GM23248 (cell line): ENCODE measurements at regions of chr16 and their contacts with region 1.

Region 1: DNA sequence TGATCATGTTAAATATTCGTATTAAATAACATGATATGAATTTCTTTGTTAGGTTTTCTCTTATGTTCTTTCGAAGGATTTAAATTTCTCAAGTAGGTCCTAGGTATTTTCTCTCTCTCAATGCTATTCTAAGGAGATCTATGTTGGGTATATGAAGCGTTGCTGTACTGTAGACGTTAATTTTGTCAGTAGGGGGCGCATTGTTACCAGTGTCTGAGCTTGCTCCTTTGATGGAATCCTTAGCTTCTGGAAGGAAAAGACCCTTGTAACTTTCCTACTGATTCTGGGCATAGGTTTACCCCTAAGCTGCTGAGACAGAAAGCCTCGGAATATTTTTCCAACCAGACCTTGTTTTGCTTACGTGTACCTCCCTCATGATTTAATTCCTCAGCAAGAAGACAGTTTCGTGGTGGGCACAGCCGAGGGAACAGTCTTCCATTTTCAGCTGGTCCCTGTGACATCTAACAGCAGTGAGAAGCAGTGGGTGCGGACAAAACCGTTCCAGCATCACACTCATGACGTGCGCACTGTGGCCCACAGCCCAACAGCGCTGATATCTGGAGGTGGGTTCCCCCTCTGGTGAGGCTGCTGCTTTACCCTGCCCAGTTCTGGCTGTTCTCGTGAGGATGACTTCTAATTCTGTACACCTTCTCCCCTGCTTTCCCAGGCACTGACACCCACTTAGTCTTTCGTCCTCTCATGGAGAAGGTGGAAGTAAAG is 17.9 kb downstream of the UTP4 start:
- DNase-seq: peak; percentile 79
- H3K4me3 ChIP-seq: no peak overlapping the region
- H3K27ac ChIP-seq: no peak overlapping the region
- H3K4me1 ChIP-seq: no peaks in the 10 kb centered on the region
- H3K27me3 ChIP-seq: no peaks in the 10 kb centered on the region

Region 2: GRCh38 chr16:69294051-69294450 is 143.7 kb after region 1 on chr16:
- in situ Hi-C with region 1: loop called (anchors 5 kb)
- DNase-seq: no peak
- H3K4me3 ChIP-seq: no peak overlapping the region
- H3K27ac ChIP-seq: no peak overlapping the region
- H3K4me1 ChIP-seq: no peaks in the 10 kb centered on the region
- H3K27me3 ChIP-seq: no peaks in the 10 kb centered on the region

Region 3: DNA sequence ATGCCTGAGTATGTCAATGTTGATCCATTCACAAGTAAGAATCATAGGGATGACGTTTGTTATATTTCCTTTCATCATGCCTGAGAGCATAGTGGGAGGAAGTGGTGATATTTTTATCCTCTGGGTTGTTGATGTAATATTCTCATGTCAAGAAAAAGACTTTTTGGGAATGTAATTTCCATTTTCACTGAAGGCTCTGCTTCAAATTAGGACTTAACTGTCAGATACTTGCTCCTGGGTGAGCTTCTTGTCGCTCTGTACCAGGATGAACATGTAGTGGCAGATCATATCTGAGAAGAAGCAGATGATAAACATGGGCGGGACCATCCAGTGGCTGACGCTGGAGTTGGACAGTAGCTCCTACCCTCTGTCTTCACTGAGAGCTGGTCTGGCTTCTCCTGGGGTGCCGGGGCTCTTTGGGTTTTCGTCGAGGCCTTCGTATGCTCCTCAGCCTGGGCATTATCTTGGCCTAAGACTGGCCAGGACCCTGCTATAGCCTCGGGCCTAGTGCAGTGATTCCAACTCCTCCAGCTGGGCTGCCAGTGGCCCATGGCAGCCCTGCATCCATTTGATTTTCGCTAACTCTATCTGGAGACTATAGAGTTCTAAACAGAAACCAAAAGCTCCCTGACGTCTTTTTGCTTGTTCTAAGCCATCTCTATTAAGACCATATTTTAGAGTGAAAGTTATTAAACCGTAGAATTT is 293.8 kb after region 1 on chr16:
- in situ Hi-C with region 1: no loop called
- DNase-seq: peak; percentile 80
- H3K4me3 ChIP-seq: peak overlapping the region; percentile 74
- H3K27ac ChIP-seq: peak overlapping the region; percentile 95
- H3K4me1 ChIP-seq: peaks cover 39% of the 10 kb centered on the region
- H3K27me3 ChIP-seq: no peaks in the 10 kb centered on the region

Region 4: GRCh38 chr16:69732101-69732500 is 581.8 kb after region 1 on chr16:
- in situ Hi-C with region 1: no loop called
- DNase-seq: no peak
- H3K4me3 ChIP-seq: no peak overlapping the region
- H3K27ac ChIP-seq: no peak overlapping the region
- H3K4me1 ChIP-seq: peaks cover 8% of the 10 kb centered on the region
- H3K27me3 ChIP-seq: no peaks in the 10 kb centered on the region